Mammary epithelial cell (primary cell): ENCODE measurements at regions of chr9 and their contacts with region 1.

Region 1: GRCh38 chr9:131178382-131178781 is 53.0 kb downstream of the NUP214 start:
- DNase-seq: peak; percentile 36
- H3K4me3 ChIP-seq: no peak overlapping the region
- H3K27ac ChIP-seq: no peak overlapping the region
- H3K4me1 ChIP-seq: no peaks in the 10 kb centered on the region
- H3K27me3 ChIP-seq: no peaks in the 10 kb centered on the region
- CTCF ChIP-seq: peak; percentile 93 to 97

Region 2: GRCh38 chr9:131076347-131077195 is 101.8 kb before region 1 on chr9:
- CTCF ChIA-PET with region 1: no interaction called
- dilution Hi-C with region 1: loop called (anchors 10 kb)
- in situ Hi-C with region 1: no loop called
- intact Hi-C with region 1: no loop called
- DNase-seq: no peak
- H3K4me3 ChIP-seq: no peak overlapping the region
- H3K27ac ChIP-seq: no peak overlapping the region
- H3K4me1 ChIP-seq: no peaks in the 10 kb centered on the region
- H3K27me3 ChIP-seq: peaks cover 3% of the 10 kb centered on the region
- CTCF ChIP-seq: no peak

Region 3: DNA sequence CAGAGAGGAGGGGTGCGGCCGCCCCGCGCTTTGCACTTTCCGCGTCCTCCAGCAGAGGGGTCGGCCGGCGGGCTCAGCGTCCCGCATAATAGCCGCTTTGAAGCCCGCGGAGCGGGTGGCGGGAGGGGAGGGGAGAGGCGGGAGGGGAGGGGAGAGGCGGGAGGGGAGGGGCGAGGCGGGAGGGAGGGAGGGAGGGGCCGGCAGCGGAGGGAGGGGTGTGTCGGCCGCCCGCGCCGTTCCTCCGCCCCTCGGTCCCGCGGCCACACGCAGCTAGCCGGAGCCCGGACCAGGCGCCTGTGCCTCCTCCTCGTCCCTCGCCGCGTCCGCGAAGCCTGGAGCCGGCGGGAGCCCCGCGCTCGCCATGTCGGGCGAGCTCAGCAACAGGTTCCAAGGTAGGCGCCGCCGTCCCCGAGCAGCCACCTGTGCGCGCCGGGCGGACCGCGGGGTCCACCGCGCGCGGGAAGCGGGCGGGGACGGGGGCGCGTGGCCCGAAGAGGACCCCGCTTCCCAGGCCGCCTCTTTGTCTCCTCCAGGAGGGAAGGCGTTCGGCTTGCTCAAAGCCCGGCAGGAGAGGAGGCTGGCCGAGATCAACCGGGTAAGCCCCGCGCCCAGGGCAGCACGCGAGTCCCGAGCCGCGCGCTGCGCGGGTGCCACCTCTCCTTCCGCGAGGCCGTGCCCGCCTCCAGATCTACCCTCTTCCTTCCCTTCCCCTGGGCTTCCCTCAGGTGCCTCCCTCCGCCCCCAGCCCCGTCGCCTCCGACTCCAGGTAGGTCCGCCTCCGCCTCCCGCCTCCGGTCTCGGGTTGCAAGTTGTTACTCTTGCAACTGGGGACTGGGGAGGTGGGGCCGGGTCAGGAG is 81.9 kb before region 1 on chr9 and contains the start of gene AIF1L:
- CTCF ChIA-PET with region 1: no interaction called
- dilution Hi-C with region 1: loop called (anchors 5 kb)
- in situ Hi-C with region 1: no loop called
- intact Hi-C with region 1: no loop called
- DNase-seq: peak; percentile 20
- H3K4me3 ChIP-seq: peak within 1 kb of the TSS; percentile 12 to 56 (median 46)
- H3K27ac ChIP-seq: no peak within 1 kb of the TSS
- H3K4me1 ChIP-seq: peaks cover 9% of the 10 kb centered on the region
- H3K27me3 ChIP-seq: peaks cover 2% of the 10 kb centered on the region
- CTCF ChIP-seq: no peak
- total RNA-seq, gene AIF1L: 5.2 to 10.7 TPM

Region 4: DNA sequence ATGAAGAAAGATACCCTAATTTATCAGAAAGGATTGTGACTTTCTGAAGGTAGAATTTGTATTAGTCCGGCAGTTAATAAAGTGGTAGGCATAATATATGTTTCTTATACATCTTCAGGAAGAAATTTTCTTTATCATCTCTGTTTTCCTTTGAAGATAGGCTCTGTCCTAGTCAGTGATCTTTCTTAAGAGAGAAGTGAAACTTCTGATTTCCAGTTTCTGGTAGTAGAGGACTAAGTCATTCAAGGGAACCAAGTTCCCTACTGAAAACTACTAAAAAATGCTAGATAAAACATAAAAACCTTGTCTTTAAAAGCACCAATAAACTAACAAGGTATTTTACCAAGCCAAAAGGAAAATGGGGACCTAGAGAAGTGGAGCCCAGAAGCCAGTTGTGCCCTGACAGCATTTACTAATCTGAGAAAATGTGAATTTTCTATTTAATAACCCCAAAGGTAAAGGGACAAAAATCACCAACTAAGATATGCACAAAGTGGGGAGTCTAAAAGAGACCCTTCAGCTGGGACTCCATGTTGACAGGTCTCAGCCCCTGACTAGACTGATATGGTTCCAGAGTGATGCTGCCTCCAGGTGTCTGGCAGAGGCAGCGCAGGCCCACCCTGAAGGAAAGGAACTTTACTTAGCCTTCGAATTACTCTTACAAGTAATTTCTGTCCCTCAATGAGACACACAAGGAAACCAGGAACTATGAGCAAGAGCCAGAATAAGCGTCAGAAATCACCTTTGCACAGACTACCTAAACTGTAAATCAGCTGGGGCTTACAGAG is 25.2 kb after region 1 on chr9:
- CTCF ChIA-PET with region 1: no interaction called
- dilution Hi-C with region 1: no loop called
- in situ Hi-C with region 1: no loop called
- intact Hi-C with region 1: loop called (anchors 2 kb)
- DNase-seq: no peak
- H3K4me3 ChIP-seq: no peak overlapping the region
- H3K27ac ChIP-seq: no peak overlapping the region
- H3K4me1 ChIP-seq: no peaks in the 10 kb centered on the region
- H3K27me3 ChIP-seq: no peaks in the 10 kb centered on the region
- CTCF ChIP-seq: peak in 1 of 2 donors; percentile 34

Region 5: GRCh38 chr9:131334629-131335367 is 156.4 kb after region 1 on chr9:
- CTCF ChIA-PET with region 1: no interaction called
- dilution Hi-C with region 1: no loop called
- in situ Hi-C with region 1: loop called in 1 of 2 experiments (anchors 10 kb)
- intact Hi-C with region 1: loop called (anchors 1 kb)
- DNase-seq: no peak
- H3K4me3 ChIP-seq: no peak overlapping the region
- H3K27ac ChIP-seq: no peak overlapping the region
- H3K4me1 ChIP-seq: no peaks in the 10 kb centered on the region
- H3K27me3 ChIP-seq: no peaks in the 10 kb centered on the region
- CTCF ChIP-seq: no peak